ENCODE measurements at regions of chr19 and their contacts with region 1.

Region 1: GRCh38 chr19:6481541-6482342 is at the start of gene DENND1C:
- DNase-seq: peak; percentile 35
- ATAC-seq: peak; percentile 52
- H3K4me3 ChIP-seq: no peak within 1 kb of the TSS
- H3K27ac ChIP-seq: no peak within 1 kb of the TSS
- H3K4me1 ChIP-seq: no peaks in the 10 kb centered on the region
- H3K27me3 ChIP-seq: no peaks in the 10 kb centered on the region
- CTCF ChIP-seq: peak; percentile 71
- total RNA-seq, gene DENND1C: not detected in 2 replicates

Region 2: GRCh38 chr19:6171566-6171965 is 310.2 kb before region 1 on chr19:
- CTCF ChIA-PET with region 1: no interaction called
- POLR2A ChIA-PET with region 1: no interaction called
- intact Hi-C with region 1: no loop called
- DNase-seq: no peak
- ATAC-seq: no peak
- H3K4me3 ChIP-seq: no peak overlapping the region
- H3K27ac ChIP-seq: no peak overlapping the region
- H3K4me1 ChIP-seq: no peaks in the 10 kb centered on the region
- H3K27me3 ChIP-seq: peaks cover 13% of the 10 kb centered on the region; the same call in 1 of the 2 replicates
- CTCF ChIP-seq: no peak

Region 3: GRCh38 chr19:6218491-6219162 is 263.1 kb before region 1 on chr19:
- CTCF ChIA-PET with region 1: no interaction called
- POLR2A ChIA-PET with region 1: no interaction called
- intact Hi-C with region 1: no loop called
- DNase-seq: peak; percentile 92
- ATAC-seq: peak; percentile 85
- H3K4me3 ChIP-seq: no peak overlapping the region
- H3K27ac ChIP-seq: no peak overlapping the region
- H3K4me1 ChIP-seq: no peaks in the 10 kb centered on the region; the same call in 1 of the 2 replicates
- H3K27me3 ChIP-seq: no peaks in the 10 kb centered on the region
- CTCF ChIP-seq: peak; percentile 96

Region 4: GRCh38 chr19:6362027-6362350 is 119.8 kb before region 1 on chr19:
- CTCF ChIA-PET with region 1: no interaction called
- POLR2A ChIA-PET with region 1: interaction called, 24 read pairs
- intact Hi-C with region 1: no loop called
- DNase-seq: no peak
- ATAC-seq: peak; percentile 25
- H3K4me3 ChIP-seq: peak overlapping the region; percentile 87
- H3K27ac ChIP-seq: no peak overlapping the region
- H3K4me1 ChIP-seq: peaks cover 16% of the 10 kb centered on the region
- H3K27me3 ChIP-seq: no peaks in the 10 kb centered on the region
- CTCF ChIP-seq: no peak